Posterior vena cava (tissue), 2 donors: ENCODE measurements at regions of chr14 and their contacts with region 1.

Region 1: DNA sequence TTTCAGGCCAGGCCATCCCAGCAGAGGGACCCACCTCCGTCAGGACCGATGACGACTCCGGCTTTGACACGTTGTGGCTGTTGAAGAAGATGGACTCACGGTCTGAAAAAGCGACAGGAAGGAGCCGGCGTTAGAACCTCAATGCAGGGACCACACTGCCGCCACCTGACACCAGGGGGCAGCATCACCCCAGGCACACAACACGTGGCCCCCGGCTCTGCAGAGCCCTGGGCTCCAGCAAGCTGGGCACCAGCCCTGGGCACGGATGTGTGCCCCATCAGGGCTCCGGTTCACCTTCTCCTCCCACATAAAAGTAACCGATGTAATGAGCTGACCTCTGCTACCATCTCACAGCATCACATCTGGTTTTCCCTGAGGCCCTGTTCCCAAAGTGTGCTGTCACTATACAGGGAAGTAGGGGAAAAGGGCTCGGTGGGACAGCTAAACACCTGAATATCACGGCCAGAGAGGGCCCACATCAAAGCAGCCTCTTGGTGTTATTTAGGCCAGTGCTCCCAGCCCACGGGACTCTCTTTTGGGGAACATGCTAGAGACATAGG is 29.0 kb downstream of the CHGA start:
- DNase-seq: peak; percentile 94

Region 2: DNA sequence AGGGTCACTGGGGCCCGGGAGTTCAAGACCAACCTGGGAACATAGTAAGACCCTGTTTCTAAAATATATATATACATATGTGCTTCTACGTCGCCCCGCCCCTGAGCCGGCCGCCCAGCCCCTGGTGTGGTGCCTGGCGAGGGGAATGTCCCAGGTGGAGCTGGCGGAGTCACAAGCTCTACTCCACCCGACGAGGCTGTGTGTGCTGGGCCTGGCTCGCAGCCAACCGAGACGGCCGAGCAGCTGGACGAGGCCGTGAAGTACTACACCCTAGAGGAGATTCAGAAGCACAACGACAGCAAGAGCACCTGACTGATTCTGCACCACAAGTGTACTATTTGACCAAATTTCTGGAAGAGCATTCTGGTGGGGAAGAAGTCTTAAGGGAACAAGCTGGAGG is 185.9 kb after region 1 on chr14:
- intact Hi-C with region 1: loop called (anchors 1 to 2 kb)
- DNase-seq: no peak